WTC11 (cell line): ENCODE measurements at regions of chr20 and their contacts with region 1.

Region 1: GRCh38 chr20:56343861-56344381 is 14.9 kb upstream of the FAM210B start:
- DNase-seq: peak; percentile 90
- ATAC-seq: peak; percentile 92
- H3K4me3 Mint-ChIP-seq: peak overlapping the region; percentile 55
- H3K27ac Mint-ChIP-seq: no peak overlapping the region
- H3K4me1 Mint-ChIP-seq: peaks cover 21% of the 10 kb centered on the region
- H3K27me3 Mint-ChIP-seq: peaks cover 87% of the 10 kb centered on the region
- CTCF ChIP-seq: peak; percentile 68

Region 2: DNA sequence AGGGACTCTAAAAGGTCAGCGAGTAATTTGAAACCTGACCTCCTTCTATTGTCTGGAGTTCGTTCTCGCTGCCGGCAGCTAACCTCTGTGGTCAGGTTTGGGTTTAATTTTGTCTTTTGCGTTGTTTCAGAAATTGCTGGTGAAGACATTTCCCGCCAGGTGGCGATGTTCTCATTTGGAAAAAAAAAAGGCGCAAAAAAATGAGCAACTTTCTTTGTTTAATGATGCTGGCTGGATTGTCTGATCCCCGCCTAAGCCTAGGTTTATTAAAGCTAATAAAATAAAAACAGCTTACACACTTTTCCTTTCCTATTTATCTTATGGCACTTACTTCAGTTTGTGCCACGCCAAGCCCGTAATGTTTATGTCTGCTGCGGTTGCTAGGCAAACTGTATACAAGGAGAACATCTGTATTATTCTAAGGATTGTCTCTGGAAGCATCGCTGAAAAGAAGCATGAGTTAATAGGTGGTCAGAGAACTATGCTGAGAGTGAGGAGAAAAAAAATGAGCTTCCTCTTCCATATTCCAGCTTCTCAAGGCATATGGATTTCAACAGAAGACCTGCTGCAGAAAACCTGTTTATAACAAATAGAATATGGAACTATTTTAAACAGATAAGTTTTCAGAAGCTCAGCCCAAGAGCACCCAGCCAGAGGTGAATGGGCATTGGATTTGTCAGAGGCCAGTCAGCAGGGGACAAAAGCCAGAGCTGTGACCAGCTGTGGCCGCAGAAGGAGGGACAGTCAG is 1662.9 kb before region 1 on chr20:
- CTCF ChIA-PET with region 1: interaction called, 13 read pairs
- POLR2A ChIA-PET with region 1: no interaction called
- DNase-seq: peak; percentile 28
- ATAC-seq: no peak; the same call in 1 of the 2 replicates
- H3K4me3 Mint-ChIP-seq: no peak overlapping the region
- H3K27ac Mint-ChIP-seq: no peak overlapping the region
- H3K4me1 Mint-ChIP-seq: no peaks in the 10 kb centered on the region
- H3K27me3 Mint-ChIP-seq: peaks cover 7% of the 10 kb centered on the region
- CTCF ChIP-seq: peak; percentile 56

Region 3: GRCh38 chr20:56328853-56329252 is 15.1 kb before region 1 on chr20:
- CTCF ChIA-PET with region 1: no interaction called
- POLR2A ChIA-PET with region 1: no interaction called
- DNase-seq: no peak
- ATAC-seq: no peak
- H3K4me3 Mint-ChIP-seq: no peak overlapping the region
- H3K27ac Mint-ChIP-seq: no peak overlapping the region
- H3K4me1 Mint-ChIP-seq: no peaks in the 10 kb centered on the region
- H3K27me3 Mint-ChIP-seq: peaks cover 11% of the 10 kb centered on the region; the same call in 1 of the 2 replicates
- CTCF ChIP-seq: no peak

Region 4: GRCh38 chr20:56358596-56359211 is 14.8 kb after region 1 on chr20 and contains the start of gene FAM210B:
- CTCF ChIA-PET with region 1: interaction called, 11 read pairs
- POLR2A ChIA-PET with region 1: no interaction called
- DNase-seq: peak; percentile 85
- ATAC-seq: peak; percentile 97
- H3K4me3 Mint-ChIP-seq: peak within 1 kb of the TSS; percentile 83
- H3K27ac Mint-ChIP-seq: no peak within 1 kb of the TSS
- H3K4me1 Mint-ChIP-seq: peaks cover 24% of the 10 kb centered on the region
- H3K27me3 Mint-ChIP-seq: peaks cover 36% of the 10 kb centered on the region
- CTCF ChIP-seq: no peak
- total RNA-seq, gene FAM210B: 16.5 to 19.1 TPM (median 16.5 TPM) in 3 replicates